Gastrocnemius medialis (tissue), 4 donors: ENCODE measurements at regions of chr17 and their contacts with region 1.

Region 1: GRCh38 chr17:38868817-38869525 is 887 bp upstream of the LASP1 start:
- DNase-seq: peak; percentile 77 to 89
- ATAC-seq: peak; percentile 78 to 81
- H3K4me3 ChIP-seq: peak overlapping the region; percentile 70 to 99 (median 87)
- H3K27ac ChIP-seq: peak overlapping the region; percentile 87 to 92 (median 90)
- H3K4me1 ChIP-seq: peaks cover 16 to 21% of the 10 kb centered on the region in 2 donors
- H3K27me3 ChIP-seq: no peaks in the 10 kb centered on the region
- CTCF ChIP-seq: peak in 1 of 5 experiments; percentile 7
- POLR2A ChIP-seq: no peak

Region 2: DNA sequence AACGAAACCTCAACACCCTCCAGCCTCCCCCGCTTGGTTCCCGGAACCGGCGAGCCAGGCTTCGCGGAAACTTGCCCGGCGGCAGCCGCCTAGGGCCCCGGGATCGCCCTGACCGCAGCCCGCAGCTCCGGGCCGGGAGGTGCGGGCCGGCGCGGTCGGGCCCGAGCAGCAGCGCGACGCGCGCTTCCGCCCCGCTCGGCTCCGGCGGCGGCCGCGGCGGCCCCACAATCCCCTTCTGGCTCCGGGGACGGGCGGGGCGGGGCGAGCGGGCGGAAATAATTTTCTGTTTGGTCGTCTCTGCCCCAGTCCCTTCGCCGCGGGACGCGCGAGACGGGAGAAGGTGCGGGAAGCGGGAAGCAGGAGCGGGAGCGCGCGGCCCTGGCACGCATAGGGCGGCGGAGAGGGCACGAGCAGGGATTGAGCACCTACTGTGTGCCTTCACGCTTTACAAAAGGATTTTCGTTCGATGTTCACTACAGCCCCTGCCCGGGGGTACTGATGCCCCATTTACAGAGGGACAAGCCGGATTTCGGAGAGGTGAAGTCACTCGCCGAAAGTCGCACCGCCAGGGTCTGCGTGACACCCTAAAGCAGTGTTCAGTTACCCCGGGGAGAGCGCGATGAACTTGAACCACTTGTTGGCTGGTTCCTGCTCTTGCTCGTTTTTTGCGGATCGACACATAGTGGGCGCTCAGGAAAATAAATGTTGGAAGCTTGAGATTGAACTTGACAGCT is 166.6 kb before region 1 on chr17:
- in situ Hi-C with region 1: no loop called
- intact Hi-C with region 1: loop called (anchors 5 kb)
- DNase-seq: peak; percentile 82 to 88
- ATAC-seq: peak; percentile 47 to 50
- H3K4me3 ChIP-seq: peak overlapping the region; percentile 71 to 93 (median 78)
- H3K27ac ChIP-seq: peak overlapping the region; percentile 96 to 100 (median 98)
- H3K4me1 ChIP-seq: peaks cover 20 to 25% of the 10 kb centered on the region in 2 donors
- H3K27me3 ChIP-seq: no peaks in the 10 kb centered on the region
- CTCF ChIP-seq: no peak
- POLR2A ChIP-seq: peak; percentile 96 to 97

Region 3: DNA sequence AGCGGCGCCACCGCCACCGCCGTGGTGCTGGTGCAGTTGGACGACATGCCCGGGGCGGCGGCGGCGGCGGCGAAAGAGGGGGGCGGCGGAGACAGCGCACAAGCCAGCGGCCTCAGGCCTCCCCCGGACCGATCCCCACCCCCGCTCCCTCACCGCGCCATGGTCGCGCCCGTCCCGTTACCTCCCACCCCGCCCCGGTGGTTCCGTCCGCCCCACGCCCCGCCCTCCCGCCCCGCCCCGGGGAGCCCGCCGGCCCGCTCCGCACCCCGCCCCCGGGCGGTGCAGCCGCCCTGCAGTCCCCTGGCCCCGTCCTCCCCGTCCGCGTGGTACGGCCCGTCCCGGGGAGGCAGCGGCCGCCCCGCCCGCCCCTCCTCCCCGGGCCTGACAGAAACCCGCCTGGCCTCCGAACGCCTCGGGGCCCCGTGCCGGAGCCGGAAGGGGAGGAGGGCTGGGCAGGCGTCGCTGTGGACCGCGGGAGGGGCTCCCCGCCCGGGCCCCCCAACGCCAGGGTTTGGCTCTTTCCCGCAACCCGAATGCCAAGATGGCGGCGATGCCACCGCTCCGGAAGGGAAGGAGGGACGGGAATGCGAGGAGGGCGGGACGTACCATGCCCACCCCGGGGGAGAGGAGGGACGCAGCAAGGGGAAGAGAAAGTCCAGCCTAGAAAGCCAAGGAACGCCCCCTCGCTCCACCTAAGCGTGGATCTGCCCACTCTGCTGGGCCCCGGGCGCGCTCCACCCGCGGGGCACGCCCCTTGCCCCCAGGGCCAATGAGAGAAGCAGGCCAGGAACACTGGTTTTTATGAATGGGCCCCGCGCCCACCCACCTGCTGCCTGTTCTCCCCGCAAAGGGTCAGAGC is 69.4 kb before region 1 on chr17 and contains the start of gene PIP4K2B:
- in situ Hi-C with region 1: no loop called
- intact Hi-C with region 1: loop called (anchors 1 kb)
- DNase-seq: peak; percentile 92 to 97
- ATAC-seq: peak; percentile 91 to 92
- H3K4me3 ChIP-seq: peak within 1 kb of the TSS; percentile 83 to 96 (median 88)
- H3K27ac ChIP-seq: peak within 1 kb of the TSS; percentile 94 to 100 (median 100)
- H3K4me1 ChIP-seq: peaks cover 34 to 37% of the 10 kb centered on the region in 2 donors
- H3K27me3 ChIP-seq: no peaks in the 10 kb centered on the region
- CTCF ChIP-seq: no peak
- POLR2A ChIP-seq: peak; percentile 47 to 51
- total RNA-seq, gene PIP4K2B: 57.2 to 97.0 (median 76.8) TPM

Region 4: DNA sequence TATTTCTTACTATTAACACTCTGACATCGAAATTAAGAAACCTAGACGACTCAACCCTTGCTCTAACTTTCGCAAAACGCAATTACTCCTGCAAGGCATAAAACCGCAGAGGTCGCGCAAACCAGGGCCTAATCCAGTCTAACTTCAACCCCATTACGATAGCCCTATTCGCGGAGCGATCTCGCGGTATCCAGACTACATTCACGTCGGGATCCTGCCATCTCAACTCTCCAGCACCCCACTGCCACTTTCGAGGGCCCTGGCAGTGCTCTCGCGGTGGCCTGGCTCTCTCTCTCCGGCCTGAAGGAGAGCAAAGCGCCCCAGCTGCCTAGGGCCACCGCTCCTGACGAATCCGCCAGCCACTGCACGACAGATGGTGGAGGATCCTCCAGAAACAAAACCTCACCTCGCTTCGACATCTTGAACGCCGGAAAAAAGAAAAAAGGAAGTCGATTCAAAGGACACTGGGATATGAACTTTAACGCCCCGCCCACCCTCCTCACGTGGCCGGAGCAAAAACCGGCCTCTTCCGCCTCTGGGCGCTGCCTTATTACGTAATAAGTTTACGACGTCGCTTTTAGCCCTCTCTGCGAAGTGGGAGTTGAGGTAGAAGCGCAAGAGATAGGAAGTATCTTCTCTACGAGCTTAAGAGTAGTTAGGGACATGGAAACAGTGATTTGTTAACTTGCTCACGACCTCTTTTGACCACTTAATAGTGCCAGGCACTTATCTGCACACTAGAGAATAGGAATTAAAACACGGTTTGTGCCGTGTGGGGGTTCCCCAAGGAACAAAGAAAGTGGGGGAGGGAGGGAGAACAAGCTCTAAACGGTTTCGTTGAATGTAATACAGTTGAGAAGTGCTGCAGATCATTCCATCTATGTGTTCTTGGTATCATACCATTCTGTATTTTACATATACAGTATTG is 15.4 kb before region 1 on chr17 and contains the start of gene RPL23:
- in situ Hi-C with region 1: no loop called
- intact Hi-C with region 1: loop called (anchors 1 kb)
- DNase-seq: peak; percentile 94 to 95
- ATAC-seq: peak; percentile 97 to 99
- H3K4me3 ChIP-seq: peak within 1 kb of the TSS; percentile 69 to 74 (median 70)
- H3K27ac ChIP-seq: peak within 1 kb of the TSS; percentile 85 to 96 (median 92)
- H3K4me1 ChIP-seq: peaks cover 23 to 28% of the 10 kb centered on the region in 2 donors
- H3K27me3 ChIP-seq: no peaks in the 10 kb centered on the region
- CTCF ChIP-seq: peak in 1 of 5 experiments; percentile 19
- POLR2A ChIP-seq: peak; percentile 82 to 83
- total RNA-seq, gene RPL23: 878 to 1,126 (median 955) TPM

Region 5: DNA sequence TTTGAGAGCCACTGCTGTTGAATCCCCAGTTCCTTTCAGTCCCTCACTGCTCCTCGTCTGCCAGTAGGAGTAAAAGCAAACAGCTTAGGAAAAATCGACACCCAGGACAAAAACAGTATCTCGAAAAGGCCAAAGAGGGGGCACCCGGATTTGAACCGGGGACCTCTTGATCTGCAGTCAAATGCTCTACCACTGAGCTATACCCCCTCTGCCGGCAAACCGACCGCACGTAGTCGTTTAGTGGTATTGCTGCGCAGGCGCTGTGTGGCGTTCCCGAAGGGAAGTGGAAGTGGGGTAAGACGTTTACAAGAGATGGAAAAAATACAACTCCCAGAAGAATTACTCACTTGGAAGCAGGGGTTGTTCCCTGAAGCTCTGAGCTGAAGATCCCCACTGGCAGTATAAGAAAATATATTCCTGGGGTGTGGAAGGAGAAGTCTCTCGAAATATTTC is 284.7 kb after region 1 on chr17:
- in situ Hi-C with region 1: loop called in 1 of 4 experiments (anchors 25 kb)
- intact Hi-C with region 1: loop called (anchors 2 kb)
- DNase-seq: peak; percentile 81 to 87
- ATAC-seq: peak; percentile 83 to 85
- H3K4me3 ChIP-seq: peak overlapping the region; percentile 61 to 89 (median 86)
- H3K27ac ChIP-seq: peak overlapping the region; percentile 84 to 96 (median 92)
- H3K4me1 ChIP-seq: peaks cover 11 to 13% of the 10 kb centered on the region in 2 donors
- H3K27me3 ChIP-seq: peaks cover 5 to 18% (median 7%) of the 10 kb centered on the region in 3 donors
- CTCF ChIP-seq: peak in 2 of 5 experiments; percentile 25 to 32
- POLR2A ChIP-seq: peak; percentile 39 to 41